Stomach (tissue), 19 donors: ENCODE measurements at regions of chr20 and their contacts with region 1.

Region 1: DNA sequence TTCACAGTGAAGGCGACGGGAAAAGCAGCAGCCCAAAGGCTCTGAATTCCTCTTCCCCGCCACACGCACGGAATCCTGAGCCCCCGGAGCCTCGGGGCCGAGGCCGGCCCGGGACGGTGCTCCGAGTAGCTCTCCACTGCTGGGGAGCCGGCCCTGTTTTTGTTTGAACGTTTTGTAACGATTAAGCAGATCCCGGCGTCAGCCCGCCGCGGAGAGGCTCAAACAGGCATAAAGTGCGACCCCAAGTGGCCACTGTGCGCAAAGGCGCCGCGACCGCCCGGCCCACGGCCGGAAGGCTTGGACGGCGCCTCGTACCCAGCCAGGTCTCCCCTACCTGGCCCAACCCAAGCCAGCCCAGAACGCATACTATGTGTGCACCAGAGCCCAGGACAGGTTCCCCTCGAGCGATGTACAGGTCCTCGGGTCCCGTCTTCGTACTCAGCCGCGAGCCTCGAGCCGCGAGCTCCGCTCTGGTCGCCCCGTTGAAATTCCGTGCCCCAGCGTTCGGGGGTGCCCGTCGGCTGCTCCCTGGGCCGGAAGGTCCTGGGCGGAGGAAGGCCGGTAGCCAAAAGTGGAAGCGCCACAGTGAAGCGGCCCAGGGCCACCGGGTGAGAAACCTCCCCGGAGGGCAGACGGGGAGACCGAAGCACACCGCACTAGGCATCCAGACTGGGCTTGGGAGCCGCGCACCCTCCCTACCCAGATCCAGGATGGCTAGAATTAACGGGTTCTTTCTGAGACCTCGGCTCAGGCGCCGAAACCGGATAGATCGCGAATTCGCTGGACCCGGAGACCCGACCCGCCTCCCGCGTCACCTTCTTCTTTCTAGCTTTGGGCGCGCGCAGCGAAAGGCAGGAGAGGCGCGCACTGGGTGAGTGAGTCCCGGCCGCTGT is 1.2 kb upstream of the MAFB start:
- DNase-seq: peak; percentile 90 to 96
- H3K4me3 ChIP-seq: peak overlapping the region; percentile 58 to 77 (median 68)
- H3K27ac ChIP-seq: peak overlapping the region; percentile 86 to 94 (median 90)
- H3K4me1 ChIP-seq: peaks cover 29 to 70% (median 50%) of the 10 kb centered on the region in 4 donors
- H3K27me3 ChIP-seq: peaks cover 9 to 94% (median 64%) of the 10 kb centered on the region in 3 donors
- CTCF ChIP-seq: peak in 5 of 7 experiments; percentile 78 to 93 (median 87)
- EP300 ChIP-seq: no peak
- POLR2A ChIP-seq: no peak

Region 2: GRCh38 chr20:40265825-40266533 is 424.2 kb before region 1 on chr20:
- intact Hi-C with region 1: loop called (anchors 10 kb)
- DNase-seq: peak; percentile 39 to 53
- H3K4me3 ChIP-seq: no peak overlapping the region
- H3K27ac ChIP-seq: no peak overlapping the region
- H3K4me1 ChIP-seq: no peaks in the 10 kb centered on the region
- H3K27me3 ChIP-seq: no peaks in the 10 kb centered on the region
- CTCF ChIP-seq: peak in 4 of 7 experiments; percentile 13 to 42 (median 17)
- EP300 ChIP-seq: no peak
- POLR2A ChIP-seq: no peak